WTC11 (cell line): ENCODE measurements at regions of chr3 and their contacts with region 1.

Region 1: DNA sequence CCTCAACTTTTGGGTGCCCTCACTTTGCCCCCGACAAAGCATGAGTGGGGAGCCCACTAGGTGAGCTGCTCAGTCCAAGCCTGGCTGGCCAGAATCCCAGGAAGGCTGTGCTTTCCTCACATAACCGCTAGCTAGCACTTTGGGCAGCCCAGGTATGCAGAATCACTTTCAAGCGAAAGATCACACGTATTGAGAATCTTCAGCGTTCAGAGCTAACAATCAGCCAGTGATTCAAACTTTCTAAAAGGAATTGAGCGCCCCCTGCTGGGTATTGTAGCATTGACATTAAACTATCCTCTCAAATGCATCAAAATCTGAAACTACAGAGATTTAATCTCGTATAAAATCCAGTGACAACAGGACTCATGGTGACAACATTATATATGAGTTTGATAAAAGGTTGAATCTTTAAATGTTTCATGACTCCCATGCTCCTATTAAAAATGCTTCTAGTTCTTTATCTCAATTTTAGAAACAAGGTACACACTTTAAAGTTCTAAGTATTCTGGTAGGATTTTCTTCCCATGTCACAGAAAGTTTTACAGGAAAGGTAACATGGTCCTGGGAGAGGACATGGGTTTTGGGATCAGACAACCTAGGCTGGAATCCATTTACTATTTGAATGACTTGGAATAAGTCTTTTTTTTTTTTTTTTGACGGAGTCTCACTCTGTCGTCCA is 11.8 kb downstream of the ANAPC13 start:
- DNase-seq: peak; percentile 78
- ATAC-seq: peak; percentile 94
- H3K4me3 Mint-ChIP-seq: no peak overlapping the region
- H3K27ac Mint-ChIP-seq: no peak overlapping the region
- H3K4me1 Mint-ChIP-seq: 0 out of 2 replicates have a peak, but pooled peaks cover 3% of the 10 kb centered on the region
- H3K27me3 Mint-ChIP-seq: no peaks in the 10 kb centered on the region
- CTCF ChIP-seq: peak; percentile 57

Region 2: GRCh38 chr3:134308350-134308891 is 165.6 kb before region 1 on chr3:
- CTCF ChIA-PET with region 1: interaction called, 86 read pairs
- POLR2A ChIA-PET with region 1: interaction called, 5 read pairs
- DNase-seq: peak; percentile 92
- ATAC-seq: peak; percentile 70
- H3K4me3 Mint-ChIP-seq: peak overlapping the region; percentile 7; the same call in 1 of the 2 replicates
- H3K27ac Mint-ChIP-seq: no peak overlapping the region; the same call in 1 of the 2 replicates
- H3K4me1 Mint-ChIP-seq: peaks cover 23% of the 10 kb centered on the region
- H3K27me3 Mint-ChIP-seq: peaks cover 3% of the 10 kb centered on the region
- CTCF ChIP-seq: peak; percentile 100

Region 3: DNA sequence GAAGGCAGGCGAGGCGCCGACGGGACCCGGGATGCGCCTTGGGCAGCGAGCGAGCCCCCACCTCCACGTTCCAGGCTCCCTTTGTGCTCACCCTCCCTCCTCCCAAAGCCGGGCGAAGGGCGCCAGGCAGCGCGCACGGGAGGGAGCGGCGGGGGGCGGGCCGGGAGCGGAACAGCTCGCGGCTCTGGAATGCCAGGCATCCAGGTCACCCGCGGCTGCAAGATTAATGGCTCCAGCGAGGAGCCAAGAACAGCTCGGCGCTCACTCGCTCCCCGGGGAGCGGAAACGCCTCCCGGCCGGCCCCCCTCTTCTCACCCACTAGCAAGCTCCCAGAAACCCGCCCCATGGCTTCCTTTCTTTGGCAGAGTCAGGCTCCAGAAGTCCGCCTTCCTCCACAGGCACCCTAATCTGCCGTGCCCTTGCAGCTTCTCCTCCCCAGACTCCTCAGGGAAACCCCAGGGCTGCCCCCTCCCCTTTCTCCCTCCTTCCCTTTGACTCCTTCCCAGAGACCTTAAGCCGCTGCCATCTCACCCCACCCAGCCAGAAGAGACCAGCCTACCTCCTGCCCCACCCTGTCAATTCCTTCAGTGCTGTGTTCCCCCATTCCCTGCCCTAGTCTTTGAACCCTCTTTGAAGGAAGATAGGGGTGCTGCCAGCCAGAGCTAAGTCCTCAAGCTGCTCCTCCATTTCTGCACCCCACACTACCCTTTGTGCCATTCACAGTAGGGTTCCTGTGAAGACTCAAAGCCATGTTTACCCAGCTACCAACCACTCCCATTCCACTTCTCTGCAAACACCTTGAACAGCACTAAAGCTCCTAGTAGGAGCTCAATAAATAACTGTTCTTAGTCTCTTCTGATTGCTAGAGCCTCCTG is 109.7 kb before region 1 on chr3:
- CTCF ChIA-PET with region 1: interaction called, 29 read pairs
- POLR2A ChIA-PET with region 1: no interaction called
- DNase-seq: peak; percentile 96
- ATAC-seq: peak; percentile 73
- H3K4me3 Mint-ChIP-seq: peak overlapping the region; percentile 37
- H3K27ac Mint-ChIP-seq: peak overlapping the region; percentile 96
- H3K4me1 Mint-ChIP-seq: peaks cover 48% of the 10 kb centered on the region
- H3K27me3 Mint-ChIP-seq: no peaks in the 10 kb centered on the region
- CTCF ChIP-seq: no peak

Region 4: GRCh38 chr3:134430950-134431445 is 43.0 kb before region 1 on chr3:
- CTCF ChIA-PET with region 1: no interaction called
- POLR2A ChIA-PET with region 1: no interaction called
- DNase-seq: no peak
- ATAC-seq: no peak
- H3K4me3 Mint-ChIP-seq: no peak overlapping the region
- H3K27ac Mint-ChIP-seq: no peak overlapping the region
- H3K4me1 Mint-ChIP-seq: peaks cover 6% of the 10 kb centered on the region; the same call in 1 of the 2 replicates
- H3K27me3 Mint-ChIP-seq: no peaks in the 10 kb centered on the region
- CTCF ChIP-seq: no peak

Region 5: GRCh38 chr3:134449277-134449676 is 24.7 kb before region 1 on chr3:
- CTCF ChIA-PET with region 1: interaction called, 12 read pairs
- POLR2A ChIA-PET with region 1: interaction called, 3 read pairs
- DNase-seq: peak; percentile 64
- ATAC-seq: peak; percentile 76
- H3K4me3 Mint-ChIP-seq: no peak overlapping the region
- H3K27ac Mint-ChIP-seq: no peak overlapping the region
- H3K4me1 Mint-ChIP-seq: peaks cover 20% of the 10 kb centered on the region
- H3K27me3 Mint-ChIP-seq: peaks cover 23% of the 10 kb centered on the region
- CTCF ChIP-seq: no peak

Region 6: GRCh38 chr3:134607054-134608022 is 133.3 kb after region 1 on chr3:
- CTCF ChIA-PET with region 1: no interaction called
- POLR2A ChIA-PET with region 1: no interaction called
- DNase-seq: no peak
- ATAC-seq: no peak
- H3K4me3 Mint-ChIP-seq: no peak overlapping the region
- H3K27ac Mint-ChIP-seq: no peak overlapping the region
- H3K4me1 Mint-ChIP-seq: no peaks in the 10 kb centered on the region
- H3K27me3 Mint-ChIP-seq: peaks cover 2% of the 10 kb centered on the region; the same call in 1 of the 2 replicates
- CTCF ChIP-seq: no peak